Vagina (tissue), 2 donors: ENCODE measurements at regions of chr1 and their contacts with region 1.

Region 1: DNA sequence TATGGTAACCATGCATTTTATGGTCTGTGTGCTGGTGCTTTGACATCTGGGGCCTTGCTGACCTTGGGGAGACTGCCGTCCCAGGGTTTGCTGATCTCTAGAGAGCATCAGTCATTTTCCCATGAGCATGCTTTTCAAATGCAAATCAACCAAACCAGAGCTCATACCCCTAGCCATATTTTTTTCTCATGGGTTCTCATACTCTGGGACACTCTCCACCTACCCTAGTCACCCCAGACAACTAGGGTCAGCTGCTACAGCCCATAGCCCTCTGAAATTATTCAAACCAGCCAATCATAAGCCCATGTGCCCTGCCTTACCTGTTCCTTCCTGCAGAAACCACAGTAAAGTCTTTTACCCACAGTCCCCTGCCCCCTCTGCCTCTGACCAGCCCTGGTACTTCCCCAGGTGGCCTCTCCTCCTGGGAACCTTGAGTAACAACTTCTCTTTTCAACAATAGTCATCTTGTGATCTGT is 132.0 kb downstream of the MAP3K21 start:
- DNase-seq: no peak
- H3K4me3 ChIP-seq: no peak overlapping the region
- H3K27ac ChIP-seq: no peak overlapping the region
- H3K4me1 ChIP-seq: no peaks in the 10 kb centered on the region
- H3K27me3 ChIP-seq: no peaks in the 10 kb centered on the region
- CTCF ChIP-seq: no peak
- POLR2A ChIP-seq: no peak

Region 2: GRCh38 chr1:233790662-233791375 is 331.3 kb after region 1 on chr1:
- intact Hi-C with region 1: loop called (anchors 10 kb)
- DNase-seq: no peak
- H3K4me3 ChIP-seq: no peak overlapping the region
- H3K27ac ChIP-seq: no peak overlapping the region
- H3K4me1 ChIP-seq: no peaks in the 10 kb centered on the region
- H3K27me3 ChIP-seq: no peaks in the 10 kb centered on the region
- CTCF ChIP-seq: peak; percentile 84 to 92 (median 91)
- POLR2A ChIP-seq: no peak